ENCODE measurements at regions of chrX and their contacts with region 1.

Region 1: GRCh38 chrX:49291615-49292337 is 11.7 kb upstream of the GAGE10 start:
- DNase-seq: peak; percentile 76
- H3K4me3 Mint-ChIP-seq: no peak overlapping the region
- H3K27ac Mint-ChIP-seq: no peak overlapping the region
- H3K4me1 Mint-ChIP-seq: peaks cover 6% of the 10 kb centered on the region
- H3K27me3 Mint-ChIP-seq: peaks cover 19% of the 10 kb centered on the region
- CTCF ChIP-seq: peak; percentile 52

Region 2: DNA sequence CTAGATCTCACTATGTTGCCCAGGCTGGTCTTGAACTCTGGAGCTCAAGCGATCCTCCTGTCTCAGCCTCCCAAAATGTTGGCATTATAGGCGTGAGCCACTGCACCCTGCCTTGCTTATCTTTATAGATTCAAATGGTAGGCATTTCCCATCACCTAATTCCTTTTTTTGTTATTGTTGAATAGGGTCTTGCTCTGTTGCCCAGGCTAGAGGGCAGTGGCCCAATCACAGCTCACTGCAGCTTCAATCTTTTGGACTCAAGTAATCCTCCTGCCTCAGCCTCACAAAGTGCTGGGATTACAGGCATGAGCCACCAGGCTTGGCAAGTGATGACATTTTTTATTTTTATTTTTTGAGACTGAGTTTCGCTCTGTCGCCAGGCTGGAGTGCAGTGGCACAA is 195.4 kb before region 1 on chrX:
- CTCF ChIA-PET with region 1: no interaction called
- intact Hi-C with region 1: no loop called
- DNase-seq: no peak
- H3K4me3 Mint-ChIP-seq: no peak overlapping the region
- H3K27ac Mint-ChIP-seq: no peak overlapping the region
- H3K4me1 Mint-ChIP-seq: peaks cover 3% of the 10 kb centered on the region
- H3K27me3 Mint-ChIP-seq: no peaks in the 10 kb centered on the region
- CTCF ChIP-seq: no peak

Region 3: GRCh38 chrX:49754233-49754857 is 462.6 kb after region 1 on chrX:
- CTCF ChIA-PET with region 1: no interaction called
- intact Hi-C with region 1: loop called (anchors 1 kb)
- DNase-seq: peak; percentile 36
- H3K4me3 Mint-ChIP-seq: no peak overlapping the region
- H3K27ac Mint-ChIP-seq: no peak overlapping the region
- H3K4me1 Mint-ChIP-seq: no peaks in the 10 kb centered on the region
- H3K27me3 Mint-ChIP-seq: peaks cover 66% of the 10 kb centered on the region
- CTCF ChIP-seq: peak; percentile 60

Region 4: GRCh38 chrX:49838374-49838773 is 546.6 kb after region 1 on chrX:
- CTCF ChIA-PET with region 1: no interaction called
- intact Hi-C with region 1: loop called (anchors 5 kb)
- DNase-seq: peak; percentile 30
- H3K4me3 Mint-ChIP-seq: no peak overlapping the region
- H3K27ac Mint-ChIP-seq: no peak overlapping the region
- H3K4me1 Mint-ChIP-seq: no peaks in the 10 kb centered on the region
- H3K27me3 Mint-ChIP-seq: peaks cover 33% of the 10 kb centered on the region
- CTCF ChIP-seq: peak; percentile 18

Region 5: GRCh38 chrX:49878834-49879659 is 587.3 kb after region 1 on chrX and contains the start of gene USP27X:
- CTCF ChIA-PET with region 1: no interaction called
- intact Hi-C with region 1: loop called (anchors 5 kb)
- DNase-seq: peak; percentile 85
- H3K4me3 Mint-ChIP-seq: peak within 1 kb of the TSS; percentile 68
- H3K27ac Mint-ChIP-seq: peak within 1 kb of the TSS; percentile 27
- H3K4me1 Mint-ChIP-seq: peaks cover 3% of the 10 kb centered on the region
- H3K27me3 Mint-ChIP-seq: no peaks in the 10 kb centered on the region
- CTCF ChIP-seq: peak; percentile 69
- total RNA-seq, gene USP27X: 3.1 and 4.2 TPM in 2 replicates

Region 6: DNA sequence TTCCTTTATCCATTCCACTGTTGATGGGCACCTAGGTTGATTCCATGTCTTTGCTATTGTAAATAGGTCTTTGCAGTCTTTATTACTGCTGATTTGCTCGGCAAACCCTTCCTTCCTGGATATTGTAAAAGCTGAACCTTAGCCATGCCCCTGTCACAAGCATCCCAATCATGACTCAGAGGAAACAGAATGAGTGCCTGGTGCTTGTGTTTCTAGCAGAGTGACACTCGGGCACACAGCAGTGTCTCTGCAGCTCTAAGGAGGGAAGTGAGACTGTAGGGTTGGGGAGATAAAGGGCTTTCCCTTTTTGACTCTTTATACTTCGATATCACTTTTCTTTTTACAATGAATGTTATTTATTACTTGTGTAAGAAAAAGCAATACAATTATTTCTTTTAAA is 825.7 kb after region 1 on chrX:
- CTCF ChIA-PET with region 1: no interaction called
- intact Hi-C with region 1: no loop called
- DNase-seq: no peak
- H3K4me3 Mint-ChIP-seq: no peak overlapping the region
- H3K27ac Mint-ChIP-seq: peak overlapping the region; percentile 74
- H3K4me1 Mint-ChIP-seq: peaks cover 28% of the 10 kb centered on the region
- H3K27me3 Mint-ChIP-seq: no peaks in the 10 kb centered on the region
- CTCF ChIP-seq: no peak

Measured in Calu3 (cell line).